ENCODE measurements at regions of chr9 and their contacts with region 1.

Region 1: GRCh38 chr9:134325817-134326723 is at the start of gene RXRA:
- DNase-seq: peak; percentile 62 to 82 (median 78)
- H3K4me3 ChIP-seq: peak within 1 kb of the TSS; percentile 73 to 97 (median 74)
- H3K4me3 Mint-ChIP-seq: peak within 1 kb of the TSS; percentile 93 to 97
- H3K27ac ChIP-seq: peak within 1 kb of the TSS; percentile 81 to 90
- H3K27ac Mint-ChIP-seq: peak within 1 kb of the TSS; percentile 80 to 95 (median 88)
- H3K4me1 ChIP-seq: peaks cover 50 to 63% of the 10 kb centered on the region in 2 donors
- H3K4me1 Mint-ChIP-seq: peaks cover 52% of the 10 kb centered on the region
- H3K27me3 ChIP-seq: peaks cover 0 to 6% of the 10 kb centered on the region in 2 donors
- H3K27me3 Mint-ChIP-seq: peaks cover 16 to 24% (median 18%) of the 10 kb centered on the region in 3 donors
- CTCF ChIP-seq: no peak
- polyA plus RNA-seq, gene RXRA: 15.8 to 91.0 (median 23.2) TPM

Region 2: GRCh38 chr9:134163353-134164196 is 162.5 kb before region 1 on chr9:
- intact Hi-C with region 1: loop called in 1 of 2 experiments (anchors 5 kb)
- DNase-seq: peak; percentile 52 to 71 (median 58)
- H3K4me3 ChIP-seq: no peak overlapping the region
- H3K4me3 Mint-ChIP-seq: no peak overlapping the region
- H3K27ac ChIP-seq: no peak overlapping the region
- H3K27ac Mint-ChIP-seq: no peak overlapping the region
- H3K4me1 ChIP-seq: peaks cover 14 to 23% of the 10 kb centered on the region in 2 donors
- H3K4me1 Mint-ChIP-seq: peaks cover 19% of the 10 kb centered on the region
- H3K27me3 ChIP-seq: no peaks in the 10 kb centered on the region
- H3K27me3 Mint-ChIP-seq: peaks cover 2 to 3% (median 2%) of the 10 kb centered on the region in 3 donors
- CTCF ChIP-seq: peak; percentile 77

Region 3: DNA sequence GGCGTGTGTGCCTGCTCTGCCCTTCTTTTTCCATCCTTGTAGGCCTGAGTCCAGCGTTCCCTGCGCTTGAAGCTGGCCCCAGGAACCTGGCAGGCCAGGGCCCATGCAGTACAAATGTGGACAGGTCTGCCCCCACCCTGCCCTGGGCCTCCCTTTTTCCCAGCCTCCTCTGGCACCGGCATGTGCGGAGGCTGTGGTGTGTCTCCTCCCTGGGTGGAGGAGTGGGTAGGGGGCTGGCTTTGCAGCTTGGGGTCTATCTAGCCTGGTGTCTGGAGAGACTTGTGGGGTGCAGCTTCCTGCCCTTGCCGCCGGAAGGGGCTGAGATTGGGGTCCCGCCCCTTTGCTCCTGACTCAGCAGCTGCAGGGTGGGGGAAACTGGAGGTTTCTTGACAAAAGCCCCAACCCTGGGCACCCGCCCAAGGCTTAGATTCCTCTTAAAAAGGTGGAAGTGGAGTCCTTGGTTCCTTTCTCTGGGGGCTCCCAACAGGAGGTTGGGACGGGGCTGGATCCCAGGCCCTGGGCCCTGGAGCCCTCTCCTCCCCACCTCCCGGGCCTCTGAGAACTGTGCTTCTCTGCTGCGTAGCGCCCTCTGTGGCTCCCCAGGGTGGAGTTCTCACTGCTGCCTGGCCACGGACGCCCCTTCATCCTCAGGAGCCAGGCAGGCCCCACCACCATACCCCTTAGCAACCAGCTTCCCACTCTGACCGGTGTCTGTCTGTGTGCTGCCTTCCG is 18.2 kb after region 1 on chr9:
- intact Hi-C with region 1: loop called in 1 of 2 experiments (anchors 2 kb)
- DNase-seq: peak; percentile 71 to 86 (median 78)
- H3K4me3 ChIP-seq: peak overlapping the region in 2 of 3 experiments; percentile 25 to 69
- H3K4me3 Mint-ChIP-seq: peak overlapping the region; percentile 69 to 88
- H3K27ac ChIP-seq: peak overlapping the region; percentile 93 to 97
- H3K27ac Mint-ChIP-seq: peak overlapping the region in 3 of 7 donors; percentile 97 to 98 (median 97)
- H3K4me1 ChIP-seq: peaks cover 86 to 99% of the 10 kb centered on the region in 2 donors
- H3K4me1 Mint-ChIP-seq: peaks cover 5% of the 10 kb centered on the region
- H3K27me3 ChIP-seq: no peaks in the 10 kb centered on the region
- H3K27me3 Mint-ChIP-seq: peaks cover 0 to 4% (median 2%) of the 10 kb centered on the region in 3 donors
- CTCF ChIP-seq: peak; percentile 22

Region 4: GRCh38 chr9:134371731-134372130 is 45.7 kb after region 1 on chr9:
- intact Hi-C with region 1: loop called (anchors 5 kb)
- DNase-seq: peak; percentile 99 to 100 (median 100)
- H3K4me3 ChIP-seq: no peak overlapping the region
- H3K4me3 Mint-ChIP-seq: peak overlapping the region; percentile 75 to 85
- H3K27ac ChIP-seq: peak overlapping the region; percentile 99 to 100
- H3K27ac Mint-ChIP-seq: peak overlapping the region; percentile 100
- H3K4me1 ChIP-seq: peaks cover 96 to 99% of the 10 kb centered on the region in 2 donors
- H3K4me1 Mint-ChIP-seq: peaks cover 89% of the 10 kb centered on the region
- H3K27me3 ChIP-seq: no peaks in the 10 kb centered on the region
- H3K27me3 Mint-ChIP-seq: no peaks in the 10 kb centered on the region
- CTCF ChIP-seq: no peak

Region 5: DNA sequence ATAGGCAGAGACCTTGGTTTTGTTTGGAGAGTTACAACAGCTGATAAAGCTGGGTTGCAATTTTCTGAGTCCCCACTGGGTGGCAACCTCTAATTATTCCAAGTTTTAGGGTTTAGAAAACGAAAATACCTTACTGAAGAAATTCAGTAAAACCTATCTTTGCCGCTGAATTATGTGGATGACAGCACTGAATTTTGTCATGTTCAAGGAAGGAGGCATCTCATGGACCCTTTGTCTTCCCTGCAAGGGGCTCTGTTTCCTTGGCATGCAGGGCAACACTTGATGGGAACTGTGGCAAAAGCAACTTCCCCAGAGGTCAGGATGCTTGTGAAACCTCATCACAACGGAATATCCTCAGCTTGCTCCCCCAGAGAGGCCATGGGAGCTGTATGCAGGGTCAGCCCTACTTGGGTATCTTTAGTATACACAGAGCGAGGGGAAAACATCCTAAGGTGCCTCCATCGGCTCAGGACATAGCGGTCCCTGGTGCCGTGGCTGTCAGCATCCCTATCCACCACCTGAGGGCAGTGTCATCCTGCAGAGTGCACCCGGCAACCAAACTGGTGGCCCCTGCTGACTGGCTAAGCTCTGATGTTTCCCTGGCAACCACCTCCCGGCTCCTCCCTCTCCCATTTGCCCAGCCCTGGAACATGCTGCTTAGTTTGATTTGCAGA is 123.3 kb after region 1 on chr9:
- intact Hi-C with region 1: loop called in 1 of 2 experiments (anchors 10 kb)
- DNase-seq: peak; percentile 89 to 90 (median 90)
- H3K4me3 ChIP-seq: no peak overlapping the region
- H3K4me3 Mint-ChIP-seq: no peak overlapping the region
- H3K27ac ChIP-seq: no peak overlapping the region
- H3K27ac Mint-ChIP-seq: peak overlapping the region in 1 of 7 donors; percentile 75
- H3K4me1 ChIP-seq: no peaks in the 10 kb centered on the region
- H3K4me1 Mint-ChIP-seq: peaks cover 8% of the 10 kb centered on the region
- H3K27me3 ChIP-seq: no peaks in the 10 kb centered on the region
- H3K27me3 Mint-ChIP-seq: peaks cover 2 to 12% (median 4%) of the 10 kb centered on the region in 3 donors
- CTCF ChIP-seq: peak; percentile 80

Region 6: GRCh38 chr9:135035781-135036760 is 710.0 kb after region 1 on chr9:
- intact Hi-C with region 1: no loop called
- DNase-seq: no peak
- H3K4me3 ChIP-seq: no peak overlapping the region
- H3K4me3 Mint-ChIP-seq: no peak overlapping the region
- H3K27ac ChIP-seq: no peak overlapping the region
- H3K27ac Mint-ChIP-seq: no peak overlapping the region
- H3K4me1 ChIP-seq: no peaks in the 10 kb centered on the region
- H3K4me1 Mint-ChIP-seq: no peaks in the 10 kb centered on the region
- H3K27me3 ChIP-seq: no peaks in the 10 kb centered on the region
- H3K27me3 Mint-ChIP-seq: peaks cover 2 to 21% (median 11%) of the 10 kb centered on the region in 3 donors
- CTCF ChIP-seq: no peak

Measured in CD14-positive monocyte (primary cell).